T-cell (primary cell): ENCODE measurements at regions of chr19 and their contacts with region 1.

Region 1: DNA sequence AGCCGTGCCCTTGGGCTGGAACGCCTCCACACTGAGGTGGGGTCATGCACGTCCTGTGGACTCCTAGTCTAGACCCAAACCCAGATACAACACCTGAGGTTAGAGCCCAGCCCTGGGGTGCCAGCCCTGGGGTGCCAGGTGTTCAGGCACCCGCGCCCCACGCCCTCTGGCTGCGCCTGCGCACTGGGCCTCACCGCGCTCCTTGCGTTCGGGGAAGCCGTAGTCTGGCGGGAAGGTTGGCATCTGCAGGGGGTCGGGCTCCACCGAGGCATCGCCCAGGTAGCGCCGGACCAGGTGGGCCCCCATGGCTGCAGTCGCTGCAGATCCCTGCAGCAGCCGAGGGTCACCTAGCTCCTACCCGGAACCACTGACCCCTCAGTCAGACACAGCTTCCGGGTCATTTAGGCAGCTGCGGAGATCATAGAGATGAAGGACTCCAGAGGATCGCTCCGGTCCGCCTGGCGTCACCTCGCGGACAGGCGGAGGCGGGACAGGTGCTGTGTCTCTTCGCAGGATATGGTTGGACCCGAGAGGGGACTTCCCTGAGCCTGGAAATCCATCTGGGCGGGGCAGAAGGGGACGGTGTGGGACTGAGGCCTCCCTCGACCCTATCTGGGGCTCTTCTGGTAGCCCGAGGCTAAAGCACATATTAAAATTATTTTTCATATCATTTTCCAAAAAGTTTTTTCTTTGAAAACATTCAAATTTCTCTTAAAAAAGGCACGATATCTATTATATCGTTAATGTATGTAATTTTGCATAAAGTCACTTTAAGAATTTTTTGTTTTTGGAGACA is at the start of gene NDUFB7:
- DNase-seq: peak; percentile 77 to 96 (median 85)
- ATAC-seq: peak; percentile 96 to 97 (median 96)
- H3K4me3 ChIP-seq: peak within 1 kb of the TSS; percentile 85 to 100
- H3K4me3 Mint-ChIP-seq: peak within 1 kb of the TSS; percentile 94 to 95 (median 94)
- H3K27ac ChIP-seq: peak within 1 kb of the TSS; percentile 40
- H3K27ac Mint-ChIP-seq: peak within 1 kb of the TSS; percentile 92 to 93
- H3K4me1 ChIP-seq: peaks cover 4 to 42% of the 10 kb centered on the region in 2 experiments
- H3K4me1 Mint-ChIP-seq: peaks cover 42 to 51% (median 44%) of the 10 kb centered on the region in 3 donors
- H3K27me3 ChIP-seq: peaks cover 0 to 4% of the 10 kb centered on the region in 2 experiments
- H3K27me3 Mint-ChIP-seq: no peaks in the 10 kb centered on the region
- total RNA-seq, gene NDUFB7: 47.9 to 112 (median 90.4) TPM

Region 2: GRCh38 chr19:14432791-14433553 is 138.9 kb before region 1 on chr19 and contains the start of gene PKN1:
- CTCF ChIA-PET with region 1: no interaction called
- POLR2A ChIA-PET with region 1: interaction called in 1 of 2 experiments, 12 read pairs
- DNase-seq: peak in 8 of 35 experiments; percentile 29 to 60 (median 38)
- ATAC-seq: peak; percentile 38 to 47 (median 44)
- H3K4me3 ChIP-seq: peak within 1 kb of the TSS; percentile 46 to 86
- H3K4me3 Mint-ChIP-seq: peak within 1 kb of the TSS; percentile 83 to 88 (median 87)
- H3K27ac ChIP-seq: peak within 1 kb of the TSS; percentile 83
- H3K27ac Mint-ChIP-seq: peak within 1 kb of the TSS; percentile 92 to 94
- H3K4me1 ChIP-seq: peaks cover 7 to 48% of the 10 kb centered on the region in 2 experiments
- H3K4me1 Mint-ChIP-seq: peaks cover 39 to 49% (median 42%) of the 10 kb centered on the region in 3 donors
- H3K27me3 ChIP-seq: peaks cover 0 to 9% of the 10 kb centered on the region in 2 experiments
- H3K27me3 Mint-ChIP-seq: no peaks in the 10 kb centered on the region
- total RNA-seq, gene PKN1: 170 to 272 (median 224) TPM

Region 3: GRCh38 chr19:14516048-14516534 is 55.8 kb before region 1 on chr19:
- CTCF ChIA-PET with region 1: no interaction called
- POLR2A ChIA-PET with region 1: no interaction called
- DNase-seq: no peak
- ATAC-seq: no peak
- H3K4me3 ChIP-seq: peak overlapping the region; percentile 88 to 89
- H3K4me3 Mint-ChIP-seq: peak overlapping the region; percentile 90 to 94 (median 93)
- H3K27ac ChIP-seq: peak overlapping the region; percentile 3
- H3K27ac Mint-ChIP-seq: peak overlapping the region; percentile 85 to 93
- H3K4me1 ChIP-seq: peaks cover 15 to 56% of the 10 kb centered on the region in 2 experiments
- H3K4me1 Mint-ChIP-seq: peaks cover 58 to 60% (median 60%) of the 10 kb centered on the region in 3 donors
- H3K27me3 ChIP-seq: no peaks in the 10 kb centered on the region
- H3K27me3 Mint-ChIP-seq: no peaks in the 10 kb centered on the region

Region 4: GRCh38 chr19:14599548-14600147 is 27.8 kb after region 1 on chr19:
- CTCF ChIA-PET with region 1: no interaction called
- POLR2A ChIA-PET with region 1: no interaction called
- DNase-seq: no peak
- ATAC-seq: no peak
- H3K4me3 ChIP-seq: no peak overlapping the region
- H3K4me3 Mint-ChIP-seq: no peak overlapping the region
- H3K27ac ChIP-seq: no peak overlapping the region
- H3K27ac Mint-ChIP-seq: no peak overlapping the region
- H3K4me1 ChIP-seq: no peaks in the 10 kb centered on the region
- H3K4me1 Mint-ChIP-seq: peaks cover 4 to 9% (median 6%) of the 10 kb centered on the region in 3 donors
- H3K27me3 ChIP-seq: peaks cover 0 to 6% of the 10 kb centered on the region in 2 experiments
- H3K27me3 Mint-ChIP-seq: peaks cover 5 to 9% of the 10 kb centered on the region in 2 donors

Region 5: DNA sequence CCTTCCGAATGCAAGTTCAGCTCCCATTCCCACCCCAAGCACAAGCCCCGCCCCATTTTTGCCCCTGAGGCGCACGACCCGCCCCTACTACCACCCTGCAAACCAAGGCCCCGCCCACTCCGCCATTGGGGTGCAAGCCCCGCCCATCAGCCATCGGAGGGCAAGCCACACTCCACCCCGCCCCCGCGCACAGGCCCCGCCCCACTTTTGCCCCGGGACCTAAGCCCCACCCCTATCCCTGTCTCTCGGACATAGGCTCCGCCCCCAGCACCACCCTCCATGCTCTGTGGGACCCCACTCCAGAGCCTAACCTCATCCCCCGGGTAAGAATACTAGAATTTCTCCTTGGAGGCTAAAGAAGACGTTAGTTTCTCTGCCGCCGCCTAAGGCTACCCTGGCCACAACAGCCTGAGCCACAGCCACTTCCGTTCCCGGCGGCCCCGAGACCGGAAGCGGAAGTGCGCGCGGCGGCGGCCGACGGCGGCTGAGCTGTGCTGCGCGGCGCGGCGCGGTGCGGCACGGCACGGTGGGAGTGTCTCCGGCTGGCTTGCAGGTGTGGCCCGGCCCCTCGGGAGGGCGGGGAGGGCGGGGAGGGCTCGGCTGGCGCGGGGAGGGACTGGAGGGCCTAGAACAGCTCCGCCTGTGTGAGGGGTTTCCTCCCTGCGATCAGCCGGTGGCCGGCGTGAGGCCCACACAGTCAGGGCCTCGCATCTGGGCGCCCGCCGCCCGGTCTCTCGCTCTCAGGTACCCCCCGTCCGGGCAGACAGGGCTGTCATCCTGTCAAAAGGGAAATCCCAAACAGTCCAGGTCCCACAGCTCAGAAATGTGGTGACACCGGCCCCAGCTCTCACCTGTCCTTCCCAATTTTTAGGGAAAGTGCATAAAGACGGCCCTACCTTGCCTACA is 118.0 kb after region 1 on chr19 and contains the start of gene ZNF333:
- CTCF ChIA-PET with region 1: interaction called, 10 to 56 read pairs
- POLR2A ChIA-PET with region 1: interaction called in 1 of 2 experiments, 3 read pairs
- DNase-seq: peak; percentile 86 to 98 (median 95)
- ATAC-seq: peak; percentile 89 to 95 (median 93)
- H3K4me3 ChIP-seq: peak within 1 kb of the TSS; percentile 62 to 89
- H3K4me3 Mint-ChIP-seq: peak within 1 kb of the TSS; percentile 83 to 94 (median 89)
- H3K27ac ChIP-seq: peak within 1 kb of the TSS; percentile 96
- H3K27ac Mint-ChIP-seq: peak within 1 kb of the TSS; percentile 99
- H3K4me1 ChIP-seq: peaks cover 4 to 13% of the 10 kb centered on the region in 2 experiments
- H3K4me1 Mint-ChIP-seq: peaks cover 16 to 31% (median 23%) of the 10 kb centered on the region in 3 donors
- H3K27me3 ChIP-seq: no peaks in the 10 kb centered on the region
- H3K27me3 Mint-ChIP-seq: no peaks in the 10 kb centered on the region
- total RNA-seq, gene ZNF333: 20.5 to 39.0 (median 30.4) TPM